Right ventricle myocardium inferior (tissue), 1 donor: ENCODE measurements at regions of chr14 and their contacts with region 1.

Region 1: DNA sequence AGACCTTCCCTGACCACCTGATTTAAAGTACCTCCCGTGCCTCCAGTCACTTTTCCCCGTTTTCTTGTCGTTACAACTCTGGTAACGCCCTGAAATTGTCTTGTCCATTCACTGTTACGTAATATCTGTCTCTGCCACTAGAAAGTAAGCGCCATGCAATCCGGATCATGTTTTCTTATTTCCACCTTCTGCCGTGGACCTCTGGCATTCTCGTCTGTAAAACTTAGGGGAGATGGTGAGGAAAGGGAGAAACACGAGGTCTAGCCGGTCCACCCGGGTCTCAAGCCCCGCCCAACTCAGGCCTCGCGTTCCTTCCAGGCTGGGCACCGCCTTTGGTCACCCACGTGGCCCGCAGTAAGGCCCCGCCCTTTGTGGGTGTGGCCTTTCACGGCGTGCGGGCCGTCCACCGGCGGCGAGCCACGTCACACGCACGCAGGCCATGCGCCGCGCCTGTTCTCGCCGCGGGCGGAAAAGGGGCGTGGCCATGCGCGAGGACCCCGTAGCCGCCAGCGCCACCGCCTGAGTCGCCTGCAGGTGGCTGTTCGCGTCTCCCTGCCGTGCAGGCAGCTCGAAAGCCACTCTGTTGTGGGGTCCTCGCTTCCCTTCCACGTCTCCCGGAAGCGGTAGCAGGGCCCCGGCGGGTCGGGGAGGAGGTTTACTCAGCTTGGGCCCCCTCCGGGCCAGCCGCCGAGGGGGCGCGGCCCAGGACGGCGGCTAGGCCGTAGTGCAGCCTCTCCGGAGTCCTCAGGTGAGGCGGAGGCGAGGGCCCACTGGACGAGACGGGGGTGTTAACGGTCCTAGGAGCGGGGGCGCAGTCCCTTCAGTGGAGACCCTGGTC is at the start of gene GOLGA5:
- DNase-seq: peak; percentile 99
- ATAC-seq: peak; percentile 99
- total RNA-seq, gene GOLGA5: 18.9 TPM

Region 2: DNA sequence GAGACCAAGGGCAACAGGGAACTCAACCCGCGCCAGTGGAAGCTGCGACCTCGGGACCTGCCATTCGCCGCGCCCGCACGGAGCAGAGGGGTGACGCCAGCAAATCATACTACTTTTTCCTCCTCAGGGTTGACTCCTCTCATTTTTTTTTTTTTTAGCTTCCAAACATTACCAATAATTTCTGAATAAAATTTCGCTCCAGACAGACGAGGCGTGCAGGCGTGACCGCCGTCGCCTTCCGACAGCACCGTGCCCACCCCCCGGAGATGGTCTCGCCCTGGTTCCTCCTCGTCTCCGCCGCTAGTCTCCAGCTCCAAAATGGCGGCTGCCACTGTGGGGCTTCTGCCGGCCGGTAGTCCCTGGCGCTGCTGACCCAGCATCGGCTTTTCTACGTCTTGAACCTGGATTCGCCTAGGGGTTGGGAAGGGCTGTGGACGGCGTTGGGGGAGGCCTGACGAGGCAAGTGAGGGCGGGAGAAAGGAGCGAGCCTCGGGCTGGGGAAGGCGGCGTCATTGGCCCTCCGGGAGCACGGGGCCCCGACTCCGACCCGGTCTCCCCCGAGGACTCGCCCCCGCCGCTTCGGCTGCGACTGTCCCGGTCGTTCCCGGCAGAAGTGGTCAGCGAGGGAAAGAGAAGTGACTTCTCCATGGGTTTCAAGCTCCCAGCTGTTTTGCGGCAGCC is 672.1 kb before region 1 on chr14 and contains the starts of genes CPSF2 and NDUFB1:
- intact Hi-C with region 1: loop called (anchors 10 kb)
- DNase-seq: peak; percentile 92
- ATAC-seq: peak; percentile 91
- total RNA-seq, gene CPSF2: 38.8 TPM
- total RNA-seq, gene NDUFB1: 635 TPM

Region 3: GRCh38 chr14:92603309-92604242 is 190.4 kb before region 1 on chr14:
- intact Hi-C with region 1: no loop called
- DNase-seq: no peak
- ATAC-seq: peak; percentile 89

Region 4: GRCh38 chr14:92748259-92749016 is 45.5 kb before region 1 on chr14 and contains the start of gene LGMN:
- intact Hi-C with region 1: loop called (anchors 5 kb)
- DNase-seq: peak; percentile 97
- ATAC-seq: peak; percentile 99
- total RNA-seq, gene LGMN: 122 TPM

Region 5: DNA sequence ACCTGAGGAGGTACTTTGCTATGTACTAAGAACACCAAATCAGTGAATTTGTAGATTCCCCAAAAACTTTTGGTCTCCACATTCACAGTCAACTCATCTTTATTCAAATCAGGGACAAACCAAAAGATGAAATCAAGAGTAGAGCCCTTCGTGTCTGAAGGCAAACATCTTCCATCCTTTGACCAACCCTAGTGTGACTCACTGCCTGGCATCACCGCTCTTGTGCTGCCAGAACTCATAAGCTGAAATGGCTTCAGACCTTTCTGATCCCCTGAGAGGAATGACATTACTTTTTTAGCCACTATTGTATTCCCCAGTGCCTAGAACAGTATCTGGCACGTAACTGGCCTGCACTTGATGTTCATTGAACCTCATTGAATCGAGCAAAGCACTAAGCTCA is 50.3 kb after region 1 on chr14:
- intact Hi-C with region 1: no loop called
- DNase-seq: no peak
- ATAC-seq: no peak

Region 6: GRCh38 chr14:93184388-93185353 is 390.7 kb after region 1 on chr14 and contains the starts of genes LYSET and MOAP1:
- intact Hi-C with region 1: no loop called
- DNase-seq: peak; percentile 95
- ATAC-seq: peak; percentile 94
- total RNA-seq, gene LYSET: 23.0 TPM
- total RNA-seq, gene MOAP1: 52.5 TPM